Activated CD8-positive, alpha-beta T cell treated with anti-CD3 and anti-CD28 coated beads for 36 hours (primary cell): ENCODE measurements at regions of chr16 and their contacts with region 1.

Region 1: DNA sequence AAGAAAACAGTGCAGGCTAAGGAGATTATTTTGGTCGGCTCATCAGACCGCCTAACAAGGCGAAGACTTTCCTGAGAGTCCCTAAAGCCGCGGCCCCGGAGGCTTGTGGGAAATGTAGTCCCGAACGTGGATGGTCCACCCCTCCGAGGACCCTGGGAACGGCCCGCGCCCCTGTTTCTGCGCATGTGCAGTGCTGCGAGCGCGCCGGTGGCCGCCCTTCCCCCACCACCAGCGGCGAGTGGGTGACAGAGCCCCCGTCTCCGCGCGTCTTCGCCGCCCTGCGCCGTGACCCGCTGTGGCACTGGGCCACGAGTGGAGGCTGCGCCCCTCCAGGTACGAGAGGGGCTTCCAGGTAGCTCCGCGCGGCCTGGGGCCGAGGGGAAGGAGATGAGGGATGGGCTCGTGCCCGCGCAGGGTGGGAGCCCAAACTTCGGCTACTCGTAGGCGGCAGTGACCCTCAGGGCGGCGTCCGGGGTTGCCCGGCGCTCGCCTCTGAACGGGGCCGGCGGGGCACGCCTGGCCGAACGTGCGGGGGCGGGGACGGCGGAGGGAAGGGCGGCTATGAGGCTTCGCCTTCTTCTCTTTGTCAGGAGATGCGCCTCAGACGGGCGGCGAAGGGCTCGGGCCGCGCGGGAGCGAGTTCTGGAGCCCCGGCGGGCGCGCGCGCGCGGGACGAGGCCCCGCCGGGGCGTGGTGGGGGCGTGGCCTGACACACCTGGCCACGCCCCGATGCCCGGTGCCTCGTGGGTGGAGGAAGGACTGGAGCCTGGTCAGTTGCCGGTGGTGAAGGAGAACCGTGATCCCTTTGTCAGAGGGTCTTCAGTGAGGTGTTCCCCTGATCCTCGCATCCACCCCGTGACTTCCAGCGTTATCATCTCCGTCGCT is at the start of gene ZFP1:
- DNase-seq: peak; percentile 98
- ATAC-seq: peak; percentile 92
- H3K4me3 Mint-ChIP-seq: peak within 1 kb of the TSS; percentile 84
- H3K27ac Mint-ChIP-seq: peak within 1 kb of the TSS; percentile 83
- H3K4me1 Mint-ChIP-seq: peaks cover 36% of the 10 kb centered on the region
- H3K27me3 Mint-ChIP-seq: no peaks in the 10 kb centered on the region
- CTCF ChIP-seq: no peak
- total RNA-seq, gene ZFP1: 19.8 to 23.9 TPM

Region 2: DNA sequence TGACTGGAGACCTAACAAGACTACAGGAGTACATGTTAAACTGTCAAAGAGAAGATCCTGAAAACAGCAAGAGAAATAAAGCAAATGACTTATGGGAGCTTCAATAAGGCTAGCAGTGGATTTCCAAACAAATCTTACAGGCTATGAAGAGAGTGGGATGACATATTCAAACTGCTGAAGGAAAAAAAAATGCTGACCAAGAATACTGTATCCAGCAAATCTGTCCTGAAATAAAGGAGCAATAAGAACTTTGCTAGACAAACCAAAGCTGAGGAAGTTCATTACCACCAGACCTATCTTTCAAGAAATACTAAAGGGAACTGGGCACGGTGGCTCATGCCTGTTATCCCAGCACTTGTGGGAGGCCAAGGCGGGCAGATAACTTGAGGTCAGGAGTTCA is 28.4 kb after region 1 on chr16:
- CTCF ChIA-PET with region 1: no interaction called
- POLR2A ChIA-PET with region 1: no interaction called
- intact Hi-C with region 1: no loop called
- DNase-seq: no peak
- ATAC-seq: no peak
- H3K4me3 Mint-ChIP-seq: no peak overlapping the region
- H3K27ac Mint-ChIP-seq: no peak overlapping the region
- H3K4me1 Mint-ChIP-seq: no peaks in the 10 kb centered on the region
- H3K27me3 Mint-ChIP-seq: peaks cover 1% of the 10 kb centered on the region
- CTCF ChIP-seq: no peak

Region 3: GRCh38 chr16:75188832-75189510 is 40.4 kb after region 1 on chr16:
- CTCF ChIA-PET with region 1: no interaction called
- POLR2A ChIA-PET with region 1: no interaction called
- intact Hi-C with region 1: loop called (anchors 2 kb)
- DNase-seq: no peak
- ATAC-seq: no peak
- H3K4me3 Mint-ChIP-seq: no peak overlapping the region
- H3K27ac Mint-ChIP-seq: no peak overlapping the region
- H3K4me1 Mint-ChIP-seq: no peaks in the 10 kb centered on the region
- H3K27me3 Mint-ChIP-seq: no peaks in the 10 kb centered on the region
- CTCF ChIP-seq: no peak

Region 4: GRCh38 chr16:75206749-75207451 is 58.3 kb after region 1 on chr16 and contains the start of gene CTRB2:
- CTCF ChIA-PET with region 1: no interaction called
- POLR2A ChIA-PET with region 1: no interaction called
- intact Hi-C with region 1: no loop called
- DNase-seq: no peak
- ATAC-seq: no peak
- H3K4me3 Mint-ChIP-seq: no peak within 1 kb of the TSS
- H3K27ac Mint-ChIP-seq: no peak within 1 kb of the TSS
- H3K4me1 Mint-ChIP-seq: no peaks in the 10 kb centered on the region
- H3K27me3 Mint-ChIP-seq: no peaks in the 10 kb centered on the region
- CTCF ChIP-seq: no peak
- total RNA-seq, gene CTRB2: not detected